Activated naive CD4-positive, alpha-beta T cell treated with anti-CD3 and anti-CD28 coated beads for 36 hours (primary cell): ENCODE measurements at regions of chr18 and their contacts with region 1.

Region 1: DNA sequence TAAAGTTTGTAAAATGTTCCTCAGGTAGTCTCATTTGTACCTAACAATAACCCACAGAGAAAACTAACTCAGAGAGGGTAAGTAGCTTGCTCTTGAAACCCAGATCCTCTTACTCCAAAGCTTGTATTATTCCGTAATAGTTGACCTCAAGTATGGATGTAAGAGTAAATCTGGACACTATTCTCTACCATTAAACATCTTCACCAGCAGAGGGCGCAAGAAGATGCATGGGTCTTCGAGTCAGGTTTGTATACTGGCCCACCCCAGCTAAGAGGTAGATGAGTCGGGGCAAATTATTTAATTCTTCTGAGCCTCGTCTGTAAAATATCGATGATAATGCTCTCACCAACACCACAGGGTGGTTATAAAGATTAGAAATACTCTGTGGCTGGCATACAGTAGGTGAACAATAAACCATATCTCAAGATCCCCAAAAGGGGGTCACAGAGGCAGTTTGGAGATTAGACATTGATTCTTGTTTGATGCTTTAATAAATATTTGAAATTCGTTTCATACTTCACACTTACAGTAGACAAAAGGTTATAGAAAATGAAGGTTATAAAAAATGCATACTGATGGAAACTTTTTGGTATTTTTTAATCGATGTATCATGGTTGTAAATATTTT is 3.5 kb upstream of the CABLES1 start:
- DNase-seq: peak; percentile 75
- H3K4me3 Mint-ChIP-seq: no peak overlapping the region
- H3K27ac Mint-ChIP-seq: no peak overlapping the region
- H3K4me1 Mint-ChIP-seq: peaks cover 14% of the 10 kb centered on the region
- H3K27me3 Mint-ChIP-seq: peaks cover 28% of the 10 kb centered on the region

Region 2: GRCh38 chr18:23032030-23032582 is 99.7 kb before region 1 on chr18:
- CTCF ChIA-PET with region 1: interaction called, 5 read pairs
- intact Hi-C with region 1: loop called (anchors 2 kb)
- DNase-seq: no peak
- H3K4me3 Mint-ChIP-seq: no peak overlapping the region
- H3K27ac Mint-ChIP-seq: no peak overlapping the region
- H3K4me1 Mint-ChIP-seq: no peaks in the 10 kb centered on the region
- H3K27me3 Mint-ChIP-seq: no peaks in the 10 kb centered on the region

Region 3: GRCh38 chr18:23151414-23152099 is 19.8 kb after region 1 on chr18:
- CTCF ChIA-PET with region 1: no interaction called
- intact Hi-C with region 1: no loop called
- DNase-seq: no peak
- H3K4me3 Mint-ChIP-seq: no peak overlapping the region
- H3K27ac Mint-ChIP-seq: no peak overlapping the region
- H3K4me1 Mint-ChIP-seq: no peaks in the 10 kb centered on the region
- H3K27me3 Mint-ChIP-seq: no peaks in the 10 kb centered on the region

Region 4: GRCh38 chr18:23377669-23378301 is 246.0 kb after region 1 on chr18:
- CTCF ChIA-PET with region 1: interaction called, 29 read pairs
- intact Hi-C with region 1: loop called (anchors 1 kb)
- DNase-seq: peak; percentile 20
- H3K4me3 Mint-ChIP-seq: no peak overlapping the region
- H3K27ac Mint-ChIP-seq: peak overlapping the region; percentile 53
- H3K4me1 Mint-ChIP-seq: peaks cover 16% of the 10 kb centered on the region
- H3K27me3 Mint-ChIP-seq: no peaks in the 10 kb centered on the region

Region 5: DNA sequence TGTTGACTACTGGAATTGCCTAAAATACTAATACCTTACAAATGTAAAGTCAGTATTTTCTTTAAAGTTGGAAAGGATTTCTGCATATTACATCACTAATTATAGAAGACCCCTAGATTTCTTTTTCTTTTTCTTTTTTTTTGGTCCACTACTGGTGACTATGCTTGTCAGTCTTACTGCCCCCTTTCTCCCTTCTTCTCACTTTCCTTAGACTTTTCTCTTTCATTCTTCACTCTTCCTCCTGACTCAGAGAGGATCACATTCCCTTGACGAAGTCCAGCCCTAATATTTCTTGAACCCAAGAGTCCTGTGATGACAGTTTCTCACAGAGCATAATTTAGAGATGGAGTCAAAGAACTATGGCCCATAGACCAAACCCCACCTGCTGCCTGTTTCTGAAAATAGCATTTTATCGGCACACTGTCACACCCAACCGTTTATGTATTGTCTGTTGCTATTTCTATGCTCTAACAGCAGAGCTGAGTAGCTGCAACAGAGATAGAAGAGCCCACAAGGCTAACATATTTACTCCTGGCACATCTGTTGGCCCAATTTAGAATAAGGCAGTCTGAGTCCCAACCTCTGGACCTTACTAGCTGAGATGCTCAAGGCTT is 280.7 kb after region 1 on chr18:
- CTCF ChIA-PET with region 1: interaction called, 28 read pairs
- intact Hi-C with region 1: loop called (anchors 1 kb)
- DNase-seq: no peak
- H3K4me3 Mint-ChIP-seq: no peak overlapping the region
- H3K27ac Mint-ChIP-seq: no peak overlapping the region
- H3K4me1 Mint-ChIP-seq: no peaks in the 10 kb centered on the region
- H3K27me3 Mint-ChIP-seq: no peaks in the 10 kb centered on the region

Region 6: DNA sequence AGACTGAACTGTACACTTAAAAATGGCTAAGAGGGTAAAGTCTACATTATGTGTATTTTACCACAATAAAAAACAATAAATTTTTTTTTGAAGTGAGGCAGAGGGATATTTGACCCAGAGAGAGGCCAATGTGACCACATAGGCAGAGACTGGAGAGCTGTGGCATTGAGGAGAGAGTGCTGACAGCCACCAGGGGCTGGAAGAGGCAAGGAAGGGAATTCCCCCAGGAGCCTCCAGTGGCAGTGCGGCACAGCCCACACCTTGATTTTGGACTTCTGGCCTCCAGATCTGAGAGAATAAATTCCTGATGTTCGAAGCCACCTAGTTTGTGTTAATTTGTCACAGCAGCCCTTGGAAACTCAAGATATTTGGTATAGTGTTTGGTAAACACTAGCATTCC is 508.2 kb after region 1 on chr18:
- CTCF ChIA-PET with region 1: no interaction called
- intact Hi-C with region 1: no loop called
- DNase-seq: no peak
- H3K4me3 Mint-ChIP-seq: no peak overlapping the region
- H3K27ac Mint-ChIP-seq: no peak overlapping the region
- H3K4me1 Mint-ChIP-seq: peaks cover 2% of the 10 kb centered on the region
- H3K27me3 Mint-ChIP-seq: no peaks in the 10 kb centered on the region